ENCODE measurements at regions of chr21 and their contacts with region 1.

Region 1: GRCh38 chr21:32403201-32403777 is 9.2 kb upstream of the EVA1C start:
- DNase-seq: no peak
- ATAC-seq: peak; percentile 95
- H3K4me3 ChIP-seq: no peak overlapping the region
- H3K27ac ChIP-seq: no peak overlapping the region
- H3K4me1 ChIP-seq: peaks cover 3 to 5% of the 10 kb centered on the region in 2 experiments; a peak in 3 of 4 replicates
- H3K27me3 ChIP-seq: no peaks in the 10 kb centered on the region
- CTCF ChIP-seq: peak; percentile 58 to 83 (median 65); a peak in 5 of 6 replicates
- POLR2A ChIP-seq: no peak
- RAD21 ChIP-seq: peak; percentile 81

Region 2: GRCh38 chr21:32392880-32393676 is 10.2 kb before region 1 on chr21 and contains the start of gene URB1:
- CTCF ChIA-PET with region 1: interaction called, 10 read pairs
- POLR2A ChIA-PET with region 1: no interaction called
- RAD21 ChIA-PET with region 1: no interaction called
- intact Hi-C with region 1: no loop called
- DNase-seq: peak; percentile 49
- ATAC-seq: peak; percentile 90
- H3K4me3 ChIP-seq: peak within 1 kb of the TSS; percentile 97
- H3K27ac ChIP-seq: peak within 1 kb of the TSS; percentile 84
- H3K4me1 ChIP-seq: peaks cover 13 to 18% of the 10 kb centered on the region in 2 experiments; a peak in 3 of 4 replicates
- H3K27me3 ChIP-seq: no peaks in the 10 kb centered on the region
- CTCF ChIP-seq: no peak; a peak in 1 of 6 replicates
- POLR2A ChIP-seq: peak; percentile 72
- RAD21 ChIP-seq: no peak
- total RNA-seq, gene URB1: 28.3 TPM

Region 3: GRCh38 chr21:32569261-32570230 is 166.3 kb after region 1 on chr21:
- CTCF ChIA-PET with region 1: interaction called, 11 read pairs
- POLR2A ChIA-PET with region 1: no interaction called
- RAD21 ChIA-PET with region 1: interaction called in 1 of 2 experiments, 4 read pairs
- intact Hi-C with region 1: no loop called
- DNase-seq: peak; percentile 62
- ATAC-seq: peak; percentile 90
- H3K4me3 ChIP-seq: peak overlapping the region; percentile 64 to 80
- H3K27ac ChIP-seq: peak overlapping the region; percentile 83
- H3K4me1 ChIP-seq: peaks cover 10 to 18% of the 10 kb centered on the region in 2 experiments; a peak in 3 of 4 replicates
- H3K27me3 ChIP-seq: no peaks in the 10 kb centered on the region
- CTCF ChIP-seq: peak; percentile 67 to 85 (median 85)
- POLR2A ChIP-seq: peak; percentile 46
- RAD21 ChIP-seq: peak; percentile 70

Region 4: DNA sequence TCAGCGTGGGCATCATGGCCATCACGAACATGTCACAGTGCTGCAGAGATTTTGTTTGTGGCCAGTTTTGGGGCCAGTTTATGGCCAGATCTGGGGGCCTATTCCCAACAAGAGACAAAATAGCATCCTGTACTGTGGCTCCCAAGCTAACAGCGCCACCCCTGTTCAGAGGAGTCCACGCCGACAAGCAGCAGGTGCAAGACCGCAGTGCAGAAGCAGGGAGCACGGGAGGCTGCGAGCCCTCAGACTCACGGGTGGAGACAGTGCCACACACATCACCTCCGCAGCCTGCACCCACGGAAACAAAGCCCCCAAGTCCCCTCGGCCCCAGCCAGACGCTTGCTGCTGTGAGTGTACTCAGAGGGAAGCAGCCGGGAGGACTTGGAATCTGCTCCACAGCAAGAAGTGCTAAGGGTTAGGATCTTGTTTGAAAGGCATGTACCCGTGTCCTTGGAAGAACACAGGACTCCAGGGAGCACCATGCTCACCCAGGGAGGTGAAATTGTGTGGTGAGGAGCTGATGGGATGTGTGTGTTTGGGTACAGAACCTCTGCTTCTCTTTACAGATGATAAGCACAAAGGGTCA is 174.9 kb after region 1 on chr21:
- CTCF ChIA-PET with region 1: interaction called, 15 read pairs
- POLR2A ChIA-PET with region 1: no interaction called
- RAD21 ChIA-PET with region 1: interaction called, 3 to 5 read pairs
- intact Hi-C with region 1: loop called (anchors 1 kb)
- DNase-seq: peak; percentile 18
- ATAC-seq: peak; percentile 99
- H3K4me3 ChIP-seq: peak overlapping the region in 1 of 2 experiments; percentile 28; a peak in 2 of 4 replicates
- H3K27ac ChIP-seq: no peak overlapping the region
- H3K4me1 ChIP-seq: peaks cover 0 to 4% of the 10 kb centered on the region in 2 experiments; a peak in 1 of 4 replicates
- H3K27me3 ChIP-seq: peaks cover 11% of the 10 kb centered on the region; the same call in 1 of the 2 replicates
- CTCF ChIP-seq: peak; percentile 50 to 78 (median 69); a peak in 5 of 6 replicates
- POLR2A ChIP-seq: no peak
- RAD21 ChIP-seq: peak; percentile 76

Region 5: GRCh38 chr21:32597205-32597604 is 193.9 kb after region 1 on chr21:
- CTCF ChIA-PET with region 1: interaction called, 68 read pairs
- POLR2A ChIA-PET with region 1: no interaction called
- RAD21 ChIA-PET with region 1: interaction called, 5 to 11 read pairs
- intact Hi-C with region 1: loop called (anchors 1 kb)
- DNase-seq: peak; percentile 77
- ATAC-seq: peak; percentile 80
- H3K4me3 ChIP-seq: no peak overlapping the region; a peak in 1 of 4 replicates
- H3K27ac ChIP-seq: no peak overlapping the region
- H3K4me1 ChIP-seq: peaks cover 3 to 14% of the 10 kb centered on the region in 2 experiments; a peak in 3 of 4 replicates
- H3K27me3 ChIP-seq: no peaks in the 10 kb centered on the region
- CTCF ChIP-seq: no peak
- POLR2A ChIP-seq: no peak
- RAD21 ChIP-seq: peak; percentile 12; the same call in 1 of the 2 replicates

Region 6: DNA sequence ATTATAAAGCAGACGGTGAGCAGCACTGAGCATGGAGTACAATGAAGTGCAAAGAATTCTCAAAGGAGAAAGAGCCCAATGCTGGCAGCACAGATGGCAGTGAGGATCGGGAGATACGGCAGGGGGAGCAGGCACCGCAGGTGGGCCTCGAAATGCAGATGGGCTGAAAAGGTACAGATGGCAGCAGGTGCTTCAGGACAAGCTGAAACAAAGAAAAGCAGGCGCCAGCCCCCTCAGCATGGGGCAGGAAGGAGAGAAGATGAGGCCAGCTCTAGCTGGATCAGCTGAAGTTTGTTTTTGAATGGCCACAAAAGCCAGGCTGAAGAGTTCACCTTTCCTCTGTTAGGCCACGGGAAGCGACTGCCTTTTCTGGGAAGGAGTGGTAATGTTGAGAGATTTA is 201.2 kb after region 1 on chr21:
- CTCF ChIA-PET with region 1: interaction called, 68 read pairs
- POLR2A ChIA-PET with region 1: no interaction called
- RAD21 ChIA-PET with region 1: interaction called, 5 to 11 read pairs
- intact Hi-C with region 1: loop called (anchors 1 kb)
- DNase-seq: no peak
- ATAC-seq: no peak
- H3K4me3 ChIP-seq: no peak overlapping the region
- H3K27ac ChIP-seq: no peak overlapping the region
- H3K4me1 ChIP-seq: no peaks in the 10 kb centered on the region
- H3K27me3 ChIP-seq: no peaks in the 10 kb centered on the region
- CTCF ChIP-seq: no peak
- POLR2A ChIP-seq: no peak
- RAD21 ChIP-seq: no peak

Measured in HCT116 (cell line).